OCI-LY7 (cell line): ENCODE measurements at regions of chr4 and their contacts with region 1.

Region 1: DNA sequence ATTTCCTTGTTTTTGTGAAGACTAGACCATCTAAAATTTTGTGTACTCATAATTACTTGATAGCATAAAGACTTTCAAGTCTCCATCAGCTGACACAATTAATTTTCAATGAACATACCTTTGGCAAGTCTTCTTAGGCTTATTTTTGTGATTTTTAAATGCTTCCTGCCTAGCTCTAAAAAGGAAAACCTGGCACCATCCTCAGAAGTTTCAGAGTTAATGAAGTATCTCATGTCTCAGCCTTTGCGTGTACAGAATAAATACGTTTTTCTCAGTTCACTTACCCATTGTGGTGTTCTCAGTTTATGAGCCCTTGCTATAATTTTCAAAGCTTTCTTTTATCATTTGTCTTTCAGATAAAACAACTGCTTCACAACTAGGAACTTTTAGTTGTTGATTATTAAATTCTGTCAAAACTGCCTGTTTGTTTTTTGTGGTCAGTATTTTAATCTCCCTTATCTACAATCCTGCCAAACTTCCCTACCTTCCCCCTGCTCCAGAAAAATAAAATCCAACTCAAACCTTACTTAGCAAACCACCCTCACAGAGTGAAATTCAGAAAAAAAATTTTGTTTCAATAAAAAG is 21.6 kb downstream of the ADD1 start:
- DNase-seq: no peak
- H3K4me3 ChIP-seq: no peak overlapping the region
- H3K27ac ChIP-seq: no peak overlapping the region
- H3K4me1 ChIP-seq: peaks cover 11% of the 10 kb centered on the region
- CTCF ChIP-seq: no peak

Region 2: GRCh38 chr4:2915789-2916188 is 50.5 kb after region 1 on chr4:
- CTCF ChIA-PET with region 1: no interaction called
- POLR2A ChIA-PET with region 1: no interaction called
- intact Hi-C with region 1: loop called (anchors 2 kb)
- DNase-seq: no peak
- H3K4me3 ChIP-seq: no peak overlapping the region
- H3K27ac ChIP-seq: no peak overlapping the region
- H3K4me1 ChIP-seq: no peaks in the 10 kb centered on the region
- CTCF ChIP-seq: no peak